ENCODE measurements at regions of chr1 and their contacts with region 1.

Region 1: GRCh38 chr1:20212685-20213331 is 26.5 kb upstream of the PLA2G2C start:
- DNase-seq: peak; percentile 82
- H3K4me3 ChIP-seq: no peak overlapping the region; a peak in 1 of 4 replicates
- H3K27ac ChIP-seq: no peak overlapping the region
- H3K4me1 ChIP-seq: peaks cover 0 to 11% of the 10 kb centered on the region in 2 experiments; a peak in 1 of 4 replicates
- H3K27me3 ChIP-seq: peaks cover 24% of the 10 kb centered on the region
- CTCF ChIP-seq: peak; percentile 84
- EP300 ChIP-seq: no peak
- RAD21 ChIP-seq: peak; percentile 82

Region 2: DNA sequence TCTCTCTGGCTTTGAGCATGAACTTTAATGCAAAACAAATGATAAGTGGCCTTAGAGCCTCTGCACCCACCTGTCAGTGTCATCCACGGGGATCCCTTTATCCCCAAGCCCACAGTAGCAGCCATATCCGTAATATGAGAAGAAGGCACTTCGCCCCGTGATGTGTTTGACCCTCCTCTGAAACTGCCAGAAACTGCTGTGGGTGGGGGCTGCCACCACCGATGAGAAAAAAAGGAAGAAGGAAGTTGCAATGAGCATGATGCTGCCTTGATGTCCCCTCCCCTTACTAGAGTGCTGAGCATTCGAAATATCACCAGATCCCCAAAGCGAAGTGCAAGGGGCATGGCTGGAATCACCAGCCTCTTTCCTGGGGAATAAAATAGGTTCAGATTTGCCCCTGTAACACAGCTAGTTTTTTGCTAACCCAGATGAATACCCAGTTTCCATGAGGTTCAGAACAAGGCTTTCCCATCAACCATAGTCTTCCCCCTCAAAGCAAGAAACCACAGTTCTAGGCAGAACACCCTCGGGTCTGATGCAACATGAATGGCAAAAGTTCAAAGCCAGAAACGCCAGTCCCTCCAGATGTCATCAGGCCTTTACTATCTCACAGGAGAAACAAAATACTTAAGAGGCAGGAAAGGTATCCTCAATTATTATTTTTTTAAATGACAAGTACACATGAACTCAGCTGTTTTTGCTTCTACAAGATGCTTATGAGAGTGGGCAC is 37.7 kb before region 1 on chr1:
- CTCF ChIA-PET with region 1: interaction called, 13 read pairs
- POLR2A ChIA-PET with region 1: no interaction called
- DNase-seq: no peak
- H3K4me3 ChIP-seq: no peak overlapping the region
- H3K27ac ChIP-seq: no peak overlapping the region
- H3K4me1 ChIP-seq: no peaks in the 10 kb centered on the region
- H3K27me3 ChIP-seq: no peaks in the 10 kb centered on the region; the same call in 1 of the 2 replicates
- CTCF ChIP-seq: no peak
- EP300 ChIP-seq: no peak
- RAD21 ChIP-seq: no peak

Region 3: GRCh38 chr1:20223551-20224419 is 11.0 kb after region 1 on chr1:
- CTCF ChIA-PET with region 1: interaction called, 23 read pairs
- POLR2A ChIA-PET with region 1: no interaction called
- DNase-seq: no peak
- H3K4me3 ChIP-seq: no peak overlapping the region
- H3K27ac ChIP-seq: no peak overlapping the region
- H3K4me1 ChIP-seq: no peaks in the 10 kb centered on the region
- H3K27me3 ChIP-seq: peaks cover 38% of the 10 kb centered on the region; the same call in 1 of the 2 replicates
- CTCF ChIP-seq: no peak
- EP300 ChIP-seq: no peak
- RAD21 ChIP-seq: no peak

Region 4: GRCh38 chr1:20266141-20266540 is 53.3 kb after region 1 on chr1:
- CTCF ChIA-PET with region 1: interaction called, 24 read pairs
- POLR2A ChIA-PET with region 1: no interaction called
- DNase-seq: no peak
- H3K4me3 ChIP-seq: no peak overlapping the region
- H3K27ac ChIP-seq: no peak overlapping the region
- H3K4me1 ChIP-seq: peaks cover 0 to 8% of the 10 kb centered on the region in 2 experiments; a peak in 1 of 4 replicates
- H3K27me3 ChIP-seq: no peaks in the 10 kb centered on the region; the same call in 1 of the 2 replicates
- CTCF ChIP-seq: no peak
- EP300 ChIP-seq: no peak
- RAD21 ChIP-seq: no peak

Region 5: GRCh38 chr1:20308569-20308968 is 95.8 kb after region 1 on chr1:
- CTCF ChIA-PET with region 1: interaction called, 10 read pairs
- POLR2A ChIA-PET with region 1: no interaction called
- DNase-seq: peak; percentile 59
- H3K4me3 ChIP-seq: no peak overlapping the region
- H3K27ac ChIP-seq: peak overlapping the region in 1 of 2 experiments; percentile 67; a peak in 2 of 4 replicates
- H3K4me1 ChIP-seq: peaks cover 0 to 21% of the 10 kb centered on the region in 2 experiments; a peak in 1 of 4 replicates
- H3K27me3 ChIP-seq: no peaks in the 10 kb centered on the region; the same call in 1 of the 2 replicates
- CTCF ChIP-seq: no peak
- EP300 ChIP-seq: peak in 1 of 2 experiments; percentile 55; a peak in 1 of 4 replicates
- RAD21 ChIP-seq: no peak; the same call in 1 of the 2 replicates

Region 6: DNA sequence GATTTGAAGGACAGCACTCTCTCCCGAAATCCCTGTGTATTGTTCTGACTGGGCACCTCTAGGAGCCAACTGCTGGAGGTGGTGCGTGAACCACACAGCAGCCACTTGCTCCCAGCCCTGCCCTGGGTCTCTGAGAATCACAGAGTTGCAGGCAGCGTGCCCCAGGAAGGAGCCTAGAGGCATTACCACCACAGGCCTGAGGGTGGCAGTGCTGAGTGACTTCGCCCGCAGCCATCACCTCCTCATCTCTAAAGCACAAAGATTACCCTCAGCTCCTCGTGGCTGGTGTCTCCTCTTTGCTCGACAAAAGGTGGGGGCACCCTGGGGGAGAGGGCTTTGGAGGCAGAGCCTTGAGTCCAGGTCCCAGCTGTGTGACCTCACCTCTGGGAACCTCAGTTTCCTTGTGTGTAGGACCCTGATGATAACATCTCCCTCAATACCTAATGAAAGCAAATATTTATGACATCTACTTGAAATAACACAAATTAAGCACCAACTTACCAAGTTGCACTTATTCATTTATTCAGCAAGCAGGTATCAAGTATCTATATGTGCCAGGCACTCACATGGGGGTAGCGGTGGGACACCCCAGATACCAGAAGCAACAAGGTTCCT is 164.2 kb after region 1 on chr1:
- CTCF ChIA-PET with region 1: interaction called, 16 read pairs
- POLR2A ChIA-PET with region 1: no interaction called
- DNase-seq: peak; percentile 75
- H3K4me3 ChIP-seq: no peak overlapping the region
- H3K27ac ChIP-seq: no peak overlapping the region
- H3K4me1 ChIP-seq: no peaks in the 10 kb centered on the region; a peak in 1 of 4 replicates
- H3K27me3 ChIP-seq: no peaks in the 10 kb centered on the region
- CTCF ChIP-seq: peak; percentile 76
- EP300 ChIP-seq: no peak
- RAD21 ChIP-seq: peak; percentile 70

Region 7: DNA sequence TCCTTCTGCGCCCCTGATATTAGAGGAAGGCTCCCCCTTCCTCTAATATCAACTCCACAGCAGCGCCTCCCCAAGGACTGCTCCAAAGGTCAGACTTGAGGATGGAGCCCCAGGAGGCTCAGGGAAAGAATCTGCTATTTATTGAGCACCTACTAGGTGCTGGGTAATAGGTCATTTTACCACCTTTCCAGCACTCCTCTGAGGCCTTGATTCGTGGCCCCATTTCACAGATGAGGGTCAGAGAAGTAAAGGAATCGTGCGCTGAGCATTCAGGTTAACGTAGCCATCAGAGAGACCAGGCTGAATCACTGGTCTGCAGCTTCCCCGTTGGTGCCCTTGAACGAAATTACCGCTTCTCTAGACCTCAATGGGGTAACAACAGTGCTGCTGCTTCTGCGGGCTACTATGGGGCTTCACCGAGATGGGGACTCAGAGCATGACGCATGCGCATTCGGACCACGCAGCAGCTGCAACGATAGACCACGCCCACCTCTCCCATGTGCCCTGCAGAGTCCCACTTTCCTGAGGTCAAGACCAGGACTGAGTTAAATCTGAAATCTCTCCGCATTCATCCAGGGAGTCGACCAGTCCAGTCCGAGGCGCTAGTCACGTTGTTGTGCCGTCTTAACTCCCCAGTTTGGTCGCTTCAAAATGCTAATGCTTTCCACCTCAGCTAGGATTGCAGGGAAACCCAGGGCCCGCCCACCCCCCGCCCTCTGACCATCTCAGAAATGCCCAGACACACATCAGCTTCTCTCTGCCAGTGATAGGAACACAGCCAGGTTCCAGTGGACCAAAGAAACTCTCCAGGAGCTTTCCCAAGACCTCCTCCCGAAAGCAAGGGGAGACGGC is 260.3 kb after region 1 on chr1:
- CTCF ChIA-PET with region 1: interaction called, 13 read pairs
- POLR2A ChIA-PET with region 1: no interaction called
- DNase-seq: peak; percentile 78
- H3K4me3 ChIP-seq: no peak overlapping the region
- H3K27ac ChIP-seq: peak overlapping the region in 1 of 2 experiments; percentile 74; a peak in 2 of 4 replicates
- H3K4me1 ChIP-seq: peaks cover 0 to 38% of the 10 kb centered on the region in 2 experiments; a peak in 2 of 4 replicates
- H3K27me3 ChIP-seq: no peaks in the 10 kb centered on the region
- CTCF ChIP-seq: no peak
- EP300 ChIP-seq: no peak
- RAD21 ChIP-seq: no peak

Measured in SK-N-SH (cell line).